ENCODE measurements at regions of chr7 and their contacts with region 1.

Region 1: DNA sequence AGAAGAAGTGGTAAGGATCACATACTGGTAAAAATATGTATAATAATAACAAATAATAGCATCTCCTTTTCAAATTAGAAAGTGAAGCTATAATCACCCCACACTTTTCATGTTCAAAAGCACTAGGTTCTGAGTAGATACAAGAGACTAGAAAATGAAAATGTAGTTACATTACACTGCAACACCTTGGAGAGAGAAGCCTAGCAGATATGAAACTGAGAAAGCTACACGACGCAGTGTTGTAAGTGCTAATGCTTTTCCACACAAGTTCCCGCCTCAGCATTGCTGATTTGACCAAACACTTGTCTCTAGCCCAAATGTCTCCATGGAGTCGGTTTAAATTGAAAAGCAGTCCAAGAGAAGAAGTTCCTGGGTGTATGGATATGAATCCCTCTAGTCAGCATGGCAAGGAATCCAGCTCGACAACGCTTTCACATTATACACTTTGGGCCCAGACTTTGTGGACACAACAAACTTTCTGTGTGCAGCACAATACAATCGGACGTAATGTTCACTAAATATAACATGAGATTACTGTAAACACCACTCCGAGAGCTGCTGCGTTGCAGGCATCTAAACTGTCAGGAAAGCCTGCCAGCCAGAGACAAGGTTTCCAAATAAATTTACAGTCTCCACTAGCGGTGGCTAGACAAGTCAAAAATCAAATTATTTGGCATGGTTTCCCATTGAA is 1.7 kb downstream of the PDE1C start:
- DNase-seq: no peak
- H3K4me3 ChIP-seq: peak overlapping the region; percentile 14 to 73 (median 69)
- H3K27ac ChIP-seq: peak overlapping the region; percentile 15 to 88 (median 86)
- H3K4me1 ChIP-seq: peaks cover 7 to 44% (median 34%) of the 10 kb centered on the region in 4 donors
- H3K27me3 ChIP-seq: peaks cover 0 to 10% (median 0%) of the 10 kb centered on the region in 4 donors
- CTCF ChIP-seq: no peak
- EP300 ChIP-seq: no peak
- POLR2A ChIP-seq: no peak

Region 2: GRCh38 chr7:31885171-31885570 is 183.4 kb before region 1 on chr7:
- intact Hi-C with region 1: loop called (anchors 5 kb)
- DNase-seq: no peak
- H3K4me3 ChIP-seq: no peak overlapping the region
- H3K27ac ChIP-seq: peak overlapping the region; percentile 77 to 86 (median 82)
- H3K4me1 ChIP-seq: peaks cover 52 to 56% (median 53%) of the 10 kb centered on the region in 4 donors
- H3K27me3 ChIP-seq: no peaks in the 10 kb centered on the region
- CTCF ChIP-seq: no peak
- EP300 ChIP-seq: no peak
- POLR2A ChIP-seq: no peak

Region 3: GRCh38 chr7:32191305-32191704 is 122.7 kb after region 1 on chr7:
- intact Hi-C with region 1: no loop called
- DNase-seq: no peak
- H3K4me3 ChIP-seq: no peak overlapping the region
- H3K27ac ChIP-seq: no peak overlapping the region
- H3K4me1 ChIP-seq: no peaks in the 10 kb centered on the region
- H3K27me3 ChIP-seq: no peaks in the 10 kb centered on the region
- CTCF ChIP-seq: no peak
- EP300 ChIP-seq: no peak
- POLR2A ChIP-seq: no peak